ENCODE measurements at regions of chr1 and their contacts with region 1.

Region 1: DNA sequence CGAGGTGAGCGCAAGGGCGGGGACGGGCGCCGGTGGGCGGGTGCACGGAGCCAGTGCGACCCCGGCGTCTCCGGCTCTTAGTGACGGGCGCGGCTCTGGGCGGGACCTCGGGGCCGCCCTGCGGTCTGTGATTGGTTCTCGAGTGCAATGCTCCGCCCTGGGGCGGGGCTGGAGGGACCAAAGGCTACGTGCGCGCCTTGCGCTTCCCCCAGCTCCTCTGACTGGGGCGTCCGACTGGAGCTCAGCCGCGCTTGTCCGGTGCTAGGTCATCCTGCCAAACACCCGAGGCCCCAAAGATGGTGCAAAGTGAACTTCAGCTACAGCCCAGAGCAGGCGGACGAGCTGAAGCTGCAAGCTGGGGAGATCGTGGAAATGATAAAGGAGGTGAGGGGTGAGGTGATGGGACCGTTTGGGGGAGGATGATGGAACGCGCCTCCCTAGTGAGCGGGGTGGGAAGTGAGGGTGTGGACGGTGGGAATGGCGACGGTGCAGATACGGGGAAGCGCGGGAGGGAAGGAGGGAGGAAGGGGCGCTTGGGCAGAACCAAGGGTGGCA is 811 bp downstream of the SH3D21 start:
- DNase-seq: peak; percentile 85 to 96 (median 90)
- ATAC-seq: peak; percentile 98
- H3K4me3 ChIP-seq: peak overlapping the region; percentile 64
- H3K4me3 Mint-ChIP-seq: peak overlapping the region; percentile 94
- H3K27ac ChIP-seq: peak overlapping the region in 1 of 2 donors; percentile 34
- H3K27ac Mint-ChIP-seq: peak overlapping the region; percentile 78
- H3K4me1 ChIP-seq: peaks cover 24% of the 10 kb centered on the region
- H3K4me1 Mint-ChIP-seq: peaks cover 16% of the 10 kb centered on the region
- H3K27me3 ChIP-seq: no peaks in the 10 kb centered on the region
- H3K27me3 Mint-ChIP-seq: no peaks in the 10 kb centered on the region
- CTCF ChIP-seq: no peak

Region 2: DNA sequence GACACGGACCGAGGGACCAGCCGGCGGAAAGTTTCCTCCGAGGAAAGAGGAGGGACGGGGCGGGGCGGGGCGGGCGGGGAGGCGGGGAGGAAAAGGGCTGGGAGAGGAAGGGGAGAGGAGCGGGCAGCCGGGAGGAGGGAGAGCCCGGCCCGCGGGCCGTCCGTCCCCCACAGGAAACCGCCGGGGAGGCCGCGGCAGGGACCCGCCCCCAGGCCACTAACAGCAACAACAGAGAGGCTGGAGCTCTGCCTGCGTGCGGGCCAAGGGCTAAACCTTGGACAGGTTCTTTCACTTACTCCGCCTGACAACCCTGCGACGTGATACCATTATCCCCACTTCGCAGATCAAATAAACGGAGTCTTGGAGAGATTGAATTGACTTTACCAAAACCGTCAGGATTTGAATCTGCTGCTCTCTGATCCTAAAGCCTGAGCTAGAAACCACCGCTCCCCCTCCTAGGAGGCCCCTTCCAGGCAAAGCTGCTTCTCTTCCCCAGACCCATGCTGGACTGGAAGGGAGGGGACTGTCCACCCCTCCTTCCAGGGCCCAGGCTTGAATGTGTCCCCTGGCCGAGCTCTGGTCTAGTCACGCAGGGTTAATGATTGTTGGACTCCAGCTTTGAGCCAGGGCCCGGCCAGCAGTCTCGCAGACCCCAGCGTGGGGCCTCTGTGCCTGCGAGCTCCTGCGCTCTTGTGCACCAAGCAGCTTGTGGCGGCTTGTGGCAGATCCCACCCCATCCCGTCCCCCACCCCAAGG is 16.8 kb after region 1 on chr1 and contains the start of gene EVA1B:
- CTCF ChIA-PET with region 1: interaction called, 5 read pairs
- POLR2A ChIA-PET with region 1: interaction called, 19 read pairs
- intact Hi-C with region 1: no loop called
- DNase-seq: peak in 9 of 14 experiments; percentile 26 to 69 (median 49)
- ATAC-seq: peak; percentile 20
- H3K4me3 ChIP-seq: peak within 1 kb of the TSS; percentile 61
- H3K4me3 Mint-ChIP-seq: peak within 1 kb of the TSS; percentile 85
- H3K27ac ChIP-seq: no peak within 1 kb of the TSS
- H3K27ac Mint-ChIP-seq: no peak within 1 kb of the TSS
- H3K4me1 ChIP-seq: peaks cover 42% of the 10 kb centered on the region
- H3K4me1 Mint-ChIP-seq: peaks cover 30% of the 10 kb centered on the region
- H3K27me3 ChIP-seq: no peaks in the 10 kb centered on the region
- H3K27me3 Mint-ChIP-seq: no peaks in the 10 kb centered on the region
- CTCF ChIP-seq: no peak
- total RNA-seq, gene EVA1B: 1.5 to 1.8 TPM

Region 3: DNA sequence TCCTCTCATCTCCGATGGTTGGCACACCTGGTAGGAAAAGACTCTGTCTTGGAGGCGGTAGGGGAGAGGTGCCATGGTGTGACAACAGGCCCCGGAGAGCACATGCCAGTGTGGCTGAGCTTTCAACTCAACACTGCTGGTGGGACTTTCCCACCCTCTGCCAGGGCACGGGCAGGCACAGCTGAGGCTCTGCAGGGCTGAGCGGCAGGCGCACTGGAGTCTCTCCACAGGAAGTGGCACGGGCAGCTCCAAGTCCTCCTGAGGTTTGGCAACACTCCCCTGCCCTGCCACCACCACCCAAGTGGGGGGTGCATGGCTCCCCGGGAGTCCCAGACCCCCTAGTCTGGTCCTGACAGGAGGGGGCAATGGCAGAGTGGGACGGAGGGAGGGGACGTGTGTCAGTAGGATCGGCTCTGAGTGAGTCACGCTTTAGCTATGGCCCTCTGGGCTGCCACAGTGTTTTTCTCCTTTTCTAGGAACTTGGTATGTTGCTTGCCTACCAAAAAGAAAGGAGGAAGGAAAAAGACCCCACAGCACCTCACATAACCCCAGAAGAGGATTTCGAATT is 43.8 kb after region 1 on chr1:
- CTCF ChIA-PET with region 1: no interaction called
- POLR2A ChIA-PET with region 1: no interaction called
- intact Hi-C with region 1: loop called in 1 of 2 experiments (anchors 5 kb)
- DNase-seq: peak; percentile 23 to 82 (median 56)
- ATAC-seq: peak; percentile 99
- H3K4me3 ChIP-seq: no peak overlapping the region
- H3K4me3 Mint-ChIP-seq: peak overlapping the region; percentile 76
- H3K27ac ChIP-seq: peak overlapping the region; percentile 48 to 52
- H3K27ac Mint-ChIP-seq: peak overlapping the region; percentile 95
- H3K4me1 ChIP-seq: peaks cover 23% of the 10 kb centered on the region
- H3K4me1 Mint-ChIP-seq: peaks cover 26% of the 10 kb centered on the region
- H3K27me3 ChIP-seq: no peaks in the 10 kb centered on the region
- H3K27me3 Mint-ChIP-seq: no peaks in the 10 kb centered on the region
- CTCF ChIP-seq: no peak

Region 4: GRCh38 chr1:36947384-36947783 is 640.4 kb after region 1 on chr1:
- CTCF ChIA-PET with region 1: no interaction called
- POLR2A ChIA-PET with region 1: no interaction called
- intact Hi-C with region 1: no loop called
- DNase-seq: no peak
- ATAC-seq: no peak
- H3K4me3 ChIP-seq: no peak overlapping the region
- H3K4me3 Mint-ChIP-seq: no peak overlapping the region
- H3K27ac ChIP-seq: no peak overlapping the region
- H3K27ac Mint-ChIP-seq: no peak overlapping the region
- H3K4me1 ChIP-seq: no peaks in the 10 kb centered on the region
- H3K4me1 Mint-ChIP-seq: no peaks in the 10 kb centered on the region
- H3K27me3 ChIP-seq: peaks cover 0 to 5% of the 10 kb centered on the region in 2 experiments
- H3K27me3 Mint-ChIP-seq: peaks cover 45% of the 10 kb centered on the region
- CTCF ChIP-seq: no peak